Heart right ventricle (tissue), 16 donors: ENCODE measurements at regions of chr18 and their contacts with region 1.

Region 1: DNA sequence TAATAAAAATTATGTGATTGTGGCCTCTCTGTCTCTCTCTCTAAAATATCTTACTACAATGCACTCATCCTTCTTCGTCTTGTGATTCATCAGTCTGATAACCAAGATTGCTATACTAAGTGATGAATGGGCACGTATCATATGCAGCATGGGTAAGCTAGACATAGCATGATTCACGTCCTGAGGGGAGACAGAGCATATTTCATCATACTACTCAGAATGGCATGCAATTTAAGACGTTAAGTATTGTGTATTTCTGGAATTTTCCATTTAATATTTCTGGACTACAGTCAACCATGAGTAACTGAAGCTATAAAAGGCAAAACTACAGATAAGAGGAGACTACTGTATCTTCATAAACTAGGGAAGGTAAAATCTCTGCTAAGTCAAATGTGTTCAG is 97.0 kb upstream of the CD226 start:
- DNase-seq: no peak
- ATAC-seq: peak in 1 of 8 donors; percentile 63
- H3K4me3 ChIP-seq: no peak overlapping the region
- H3K27ac ChIP-seq: peak overlapping the region in 1 of 10 donors; percentile 46
- H3K4me1 ChIP-seq: peaks cover 0 to 26% (median 10%) of the 10 kb centered on the region in 9 donors
- H3K27me3 ChIP-seq: no peaks in the 10 kb centered on the region
- CTCF ChIP-seq: no peak

Region 2: GRCh38 chr18:69992776-69993175 is 51.9 kb before region 1 on chr18:
- intact Hi-C with region 1: loop called in 1 of 10 experiments (anchors 10 kb)
- DNase-seq: no peak
- ATAC-seq: no peak
- H3K4me3 ChIP-seq: no peak overlapping the region
- H3K27ac ChIP-seq: no peak overlapping the region
- H3K4me1 ChIP-seq: peaks cover 0 to 9% (median 0%) of the 10 kb centered on the region in 9 donors
- H3K27me3 ChIP-seq: no peaks in the 10 kb centered on the region
- CTCF ChIP-seq: no peak

Region 3: GRCh38 chr18:70082430-70082829 is 37.8 kb after region 1 on chr18:
- intact Hi-C with region 1: no loop called
- DNase-seq: no peak
- ATAC-seq: no peak
- H3K4me3 ChIP-seq: no peak overlapping the region
- H3K27ac ChIP-seq: no peak overlapping the region
- H3K4me1 ChIP-seq: no peaks in the 10 kb centered on the region
- H3K27me3 ChIP-seq: no peaks in the 10 kb centered on the region
- CTCF ChIP-seq: no peak

Region 4: DNA sequence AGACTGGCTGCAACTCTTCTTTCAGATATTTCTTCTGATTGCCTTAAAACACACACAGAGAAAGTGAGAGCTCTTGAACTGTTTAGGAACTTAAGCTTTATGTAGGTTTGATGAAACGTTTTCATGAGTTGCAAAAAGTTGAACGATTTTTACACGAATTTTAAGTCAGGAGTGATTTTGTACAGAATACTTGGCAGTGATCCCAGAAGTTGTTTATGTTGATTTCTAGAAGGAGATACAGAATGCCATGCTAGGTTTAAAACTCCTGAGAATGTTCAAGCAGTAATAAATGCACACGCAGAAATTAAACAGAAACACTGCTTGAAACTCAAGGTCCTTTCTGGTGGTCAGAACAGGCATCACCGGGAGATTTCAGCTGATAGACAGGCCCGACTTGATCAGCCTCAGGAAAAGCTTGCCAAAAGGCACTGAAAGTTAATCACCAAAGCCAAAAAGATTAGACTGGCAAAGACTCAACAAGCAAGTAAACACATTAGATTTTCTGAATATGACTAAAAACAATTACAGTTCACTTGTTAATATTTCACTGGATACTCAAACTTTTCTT is 367.3 kb after region 1 on chr18:
- intact Hi-C with region 1: no loop called
- DNase-seq: no peak
- ATAC-seq: no peak
- H3K4me3 ChIP-seq: no peak overlapping the region
- H3K27ac ChIP-seq: no peak overlapping the region
- H3K4me1 ChIP-seq: peaks cover 0 to 11% (median 0%) of the 10 kb centered on the region in 9 donors
- H3K27me3 ChIP-seq: no peaks in the 10 kb centered on the region
- CTCF ChIP-seq: no peak